Tibial artery (tissue), 4 donors: ENCODE measurements at regions of chr10 and their contacts with region 1.

Region 1: GRCh38 chr10:110304780-110305421 is at the start of gene SMNDC1:
- DNase-seq: peak; percentile 96 to 99
- H3K4me3 ChIP-seq: peak within 1 kb of the TSS; percentile 97 to 98
- H3K27ac ChIP-seq: peak within 1 kb of the TSS; percentile 92 to 93
- H3K4me1 ChIP-seq: peaks cover 0 to 48% (median 34%) of the 10 kb centered on the region in 4 donors
- H3K27me3 ChIP-seq: no peaks in the 10 kb centered on the region
- CTCF ChIP-seq: peak in 1 of 2 experiments; percentile 7

Region 2: GRCh38 chr10:110497438-110498086 is 192.7 kb after region 1 on chr10 and contains the start of gene DUSP5:
- intact Hi-C with region 1: loop called (anchors 5 kb)
- DNase-seq: peak; percentile 95 to 96
- H3K4me3 ChIP-seq: peak within 1 kb of the TSS; percentile 63 to 89
- H3K27ac ChIP-seq: peak within 1 kb of the TSS; percentile 81 to 86
- H3K4me1 ChIP-seq: peaks cover 0 to 43% (median 21%) of the 10 kb centered on the region in 4 donors
- H3K27me3 ChIP-seq: no peaks in the 10 kb centered on the region
- CTCF ChIP-seq: no peak

Region 3: GRCh38 chr10:110547139-110547761 is 242.3 kb after region 1 on chr10:
- intact Hi-C with region 1: loop called (anchors 5 kb)
- DNase-seq: no peak
- H3K4me3 ChIP-seq: no peak overlapping the region
- H3K27ac ChIP-seq: no peak overlapping the region
- H3K4me1 ChIP-seq: no peaks in the 10 kb centered on the region
- H3K27me3 ChIP-seq: peaks cover 0 to 18% of the 10 kb centered on the region in 2 donors
- CTCF ChIP-seq: peak; percentile 70 to 84

Region 4: GRCh38 chr10:110567201-110568054 is 262.5 kb after region 1 on chr10 and contains the start of gene SMC3:
- intact Hi-C with region 1: no loop called
- DNase-seq: peak; percentile 90 to 93
- H3K4me3 ChIP-seq: peak within 1 kb of the TSS; percentile 95 to 98
- H3K27ac ChIP-seq: peak within 1 kb of the TSS; percentile 88 to 92
- H3K4me1 ChIP-seq: peaks cover 0 to 45% (median 23%) of the 10 kb centered on the region in 4 donors
- H3K27me3 ChIP-seq: peaks cover 0 to 7% of the 10 kb centered on the region in 2 donors
- CTCF ChIP-seq: no peak